SK-N-SH (cell line): ENCODE measurements at regions of chr18 and their contacts with region 1.

Region 1: DNA sequence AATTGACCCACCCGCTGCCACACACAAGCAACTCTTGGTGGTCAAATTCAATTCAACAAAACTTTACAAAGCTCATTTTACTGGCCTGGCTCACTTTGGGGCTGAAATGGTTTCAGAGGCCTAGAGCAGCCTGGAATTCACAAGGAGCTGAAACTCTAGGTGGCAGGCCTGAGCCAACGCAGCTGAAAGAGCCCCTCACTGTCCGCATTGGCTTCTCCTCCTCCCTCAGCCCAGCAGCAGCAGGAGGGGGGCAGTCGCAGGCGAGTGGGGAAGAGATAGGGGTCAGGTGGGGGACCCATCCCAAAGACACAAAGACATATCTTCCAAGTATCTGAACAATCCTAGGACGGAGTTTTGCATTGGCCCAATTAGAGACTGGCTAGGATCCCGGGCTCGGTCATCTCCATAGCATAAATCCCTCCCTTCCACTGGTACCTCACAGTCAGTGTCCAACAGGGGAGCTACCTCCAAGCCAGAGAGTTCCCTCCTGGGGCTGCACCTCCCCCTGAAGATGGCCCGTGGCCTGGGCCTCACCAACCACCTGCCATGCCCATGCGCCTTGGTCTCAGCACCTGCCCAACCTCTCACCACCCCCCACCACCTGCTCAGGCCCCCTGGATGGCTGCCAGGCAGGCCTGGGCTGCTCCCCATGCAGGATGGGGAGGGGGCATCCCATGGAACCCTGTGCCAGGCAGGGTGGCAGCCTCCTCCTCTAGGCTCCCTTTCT is 113.4 kb downstream of the ZBTB7C start:
- DNase-seq: peak; percentile 47
- H3K4me3 ChIP-seq: no peak overlapping the region
- H3K27ac ChIP-seq: no peak overlapping the region; a peak in 1 of 4 replicates
- H3K4me1 ChIP-seq: peaks cover 0 to 33% of the 10 kb centered on the region in 2 experiments; a peak in 2 of 4 replicates
- H3K27me3 ChIP-seq: no peaks in the 10 kb centered on the region
- CTCF ChIP-seq: peak; percentile 40
- EP300 ChIP-seq: no peak
- RAD21 ChIP-seq: peak; percentile 61

Region 2: GRCh38 chr18:48314690-48315089 is 18.9 kb after region 1 on chr18:
- CTCF ChIA-PET with region 1: interaction called, 26 read pairs
- POLR2A ChIA-PET with region 1: no interaction called
- DNase-seq: no peak
- H3K4me3 ChIP-seq: no peak overlapping the region
- H3K27ac ChIP-seq: no peak overlapping the region
- H3K4me1 ChIP-seq: peaks cover 6 to 14% of the 10 kb centered on the region in 2 experiments; a peak in 3 of 4 replicates
- H3K27me3 ChIP-seq: no peaks in the 10 kb centered on the region; the same call in 1 of the 2 replicates
- CTCF ChIP-seq: no peak
- EP300 ChIP-seq: no peak
- RAD21 ChIP-seq: no peak

Region 3: GRCh38 chr18:48500517-48500916 is 204.8 kb after region 1 on chr18:
- CTCF ChIA-PET with region 1: no interaction called
- POLR2A ChIA-PET with region 1: no interaction called
- DNase-seq: no peak
- H3K4me3 ChIP-seq: no peak overlapping the region
- H3K27ac ChIP-seq: no peak overlapping the region
- H3K4me1 ChIP-seq: no peaks in the 10 kb centered on the region
- H3K27me3 ChIP-seq: no peaks in the 10 kb centered on the region
- CTCF ChIP-seq: no peak
- EP300 ChIP-seq: no peak
- RAD21 ChIP-seq: no peak